HEK293 (cell line): ENCODE measurements at regions of chr12 and their contacts with region 1.

Region 1: DNA sequence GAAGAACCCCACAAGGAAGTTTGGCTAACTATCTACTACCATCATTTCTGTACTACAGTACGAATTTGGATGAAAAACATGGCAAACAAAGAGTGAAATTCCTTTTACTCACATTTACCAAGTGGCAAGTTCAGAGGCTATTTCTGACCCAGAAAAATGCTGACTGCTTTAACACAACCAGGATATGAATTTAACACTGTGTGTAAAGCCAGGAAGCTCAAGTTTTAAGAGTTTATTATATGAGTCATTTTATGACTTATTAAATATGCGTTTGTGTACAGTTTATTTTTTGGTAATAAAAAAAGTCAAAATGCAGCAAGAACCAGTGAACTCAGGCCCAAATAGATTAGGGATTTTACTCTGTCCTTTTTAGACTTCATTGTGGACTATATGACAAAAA is 58.4 kb upstream of the STAC3 start:
- H3K4me3 ChIP-seq: no peak overlapping the region
- H3K27ac ChIP-seq: no peak overlapping the region
- H3K4me1 ChIP-seq: no peaks in the 10 kb centered on the region; the same call in 1 of the 2 replicates
- CTCF ChIP-seq: no peak

Region 2: DNA sequence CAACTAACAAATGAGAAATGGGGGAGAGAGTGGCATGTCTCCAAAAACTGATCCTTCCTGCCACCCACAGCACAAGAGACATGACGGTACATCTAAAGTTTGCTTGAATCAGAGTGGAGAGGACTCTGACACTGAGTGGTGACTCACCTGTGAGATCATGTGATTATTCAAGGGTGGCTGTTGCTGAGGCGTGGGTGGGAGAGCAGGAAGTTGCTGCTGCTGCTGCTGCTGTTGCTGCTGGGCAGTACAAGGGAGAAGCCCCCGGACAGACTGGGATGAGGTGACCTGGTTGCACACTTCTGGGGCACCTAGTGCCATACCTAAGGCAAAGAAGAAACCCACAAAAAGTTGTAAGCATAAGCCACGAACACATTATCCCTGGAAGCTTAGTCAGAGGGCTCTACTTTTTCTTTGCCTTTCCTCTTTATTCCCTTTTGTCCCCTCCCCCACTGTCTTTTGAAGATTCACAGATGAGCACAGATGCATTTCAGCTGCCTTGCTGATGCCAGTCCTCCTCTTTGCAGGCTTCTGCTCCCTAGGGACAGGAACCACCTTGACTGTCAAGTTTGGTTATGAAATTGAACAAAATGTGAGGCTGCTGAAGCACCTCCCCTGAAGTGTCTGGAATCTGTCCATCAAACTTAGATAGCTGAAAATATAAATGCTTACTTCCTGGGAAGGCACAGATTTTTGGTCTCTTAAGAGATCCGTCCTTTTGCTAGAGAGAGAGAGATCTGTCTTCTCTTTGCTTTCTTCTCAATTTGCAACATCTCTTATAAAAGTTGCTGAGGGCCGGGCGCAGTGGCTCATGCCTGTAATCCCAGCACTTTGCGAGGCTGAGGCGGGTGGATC is 29.0 kb before region 1 on chr12:
- CTCF ChIA-PET with region 1: interaction called, 17 read pairs
- POLR2A ChIA-PET with region 1: no interaction called
- H3K4me3 ChIP-seq: no peak overlapping the region
- H3K27ac ChIP-seq: no peak overlapping the region
- H3K4me1 ChIP-seq: 0 out of 2 replicates have a peak, but pooled peaks cover 7% of the 10 kb centered on the region
- CTCF ChIP-seq: no peak

Region 3: DNA sequence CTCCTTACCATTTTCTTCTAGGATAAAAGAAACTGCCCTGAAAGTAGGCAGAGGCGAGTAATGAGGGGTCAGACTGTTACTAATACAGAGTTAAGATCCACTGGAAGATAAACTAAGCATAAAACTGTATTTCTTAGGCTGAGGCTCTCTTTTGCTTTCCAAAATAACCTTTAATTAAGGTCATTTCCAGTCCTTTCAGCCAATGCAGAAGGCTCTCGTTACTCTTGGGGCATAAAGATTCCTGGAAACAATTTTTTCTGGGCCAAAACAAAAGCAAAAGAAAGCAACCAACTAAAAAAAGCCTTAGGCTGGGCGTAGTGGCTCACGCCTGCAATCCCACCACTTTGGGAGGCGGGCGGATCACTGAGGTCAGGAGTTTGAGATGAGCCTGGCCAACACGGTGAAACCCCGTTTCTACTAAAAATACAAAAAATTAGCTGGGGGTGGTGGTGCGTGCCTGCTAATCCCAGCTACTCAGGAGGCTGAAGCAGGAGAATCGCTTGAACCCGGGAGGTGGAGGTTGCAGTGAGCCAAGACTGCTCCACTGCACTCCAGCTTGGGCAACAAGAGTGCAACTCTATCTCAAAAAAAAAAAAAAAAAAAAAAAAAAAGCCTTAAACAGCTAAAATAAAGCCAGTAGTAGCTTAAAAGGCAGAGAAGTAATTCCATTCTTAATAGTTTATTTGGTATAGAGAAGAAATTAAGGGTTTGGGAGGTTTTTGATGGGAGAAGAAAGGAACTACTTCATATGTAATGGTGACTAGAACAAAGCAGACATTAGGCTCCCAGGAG is 10.5 kb after region 1 on chr12:
- CTCF ChIA-PET with region 1: interaction called, 31 read pairs
- POLR2A ChIA-PET with region 1: no interaction called
- H3K4me3 ChIP-seq: no peak overlapping the region
- H3K27ac ChIP-seq: 0 out of 2 replicates have a peak overlapping the region, but pooled peaks have one; percentile 16
- H3K4me1 ChIP-seq: peaks cover 11% of the 10 kb centered on the region
- CTCF ChIP-seq: no peak

Region 4: DNA sequence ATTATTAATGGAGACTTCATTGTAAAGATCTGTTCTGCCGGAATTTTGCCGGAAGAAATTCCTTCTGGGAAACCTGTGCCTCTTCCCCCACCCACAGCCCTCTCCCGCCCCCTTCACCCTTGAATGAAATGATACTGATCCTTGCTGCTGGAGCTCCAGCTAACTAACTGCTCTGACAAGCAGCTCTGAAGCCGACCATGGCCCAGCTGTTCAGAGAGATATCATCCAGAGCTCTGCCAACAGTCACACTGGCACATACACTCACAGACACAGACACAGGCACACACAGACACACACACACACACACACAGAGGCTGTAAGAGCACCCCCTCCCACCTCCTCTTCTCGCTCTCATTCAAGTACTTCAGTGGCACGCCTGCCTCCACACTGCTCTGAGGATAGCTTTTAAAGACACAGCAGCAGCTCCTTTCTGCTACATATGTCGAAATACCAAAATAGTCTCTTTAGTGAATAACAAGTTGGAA is 32.8 kb after region 1 on chr12:
- CTCF ChIA-PET with region 1: interaction called, 11 read pairs
- POLR2A ChIA-PET with region 1: no interaction called
- H3K4me3 ChIP-seq: no peak overlapping the region
- H3K27ac ChIP-seq: no peak overlapping the region
- H3K4me1 ChIP-seq: peaks cover 22% of the 10 kb centered on the region
- CTCF ChIP-seq: no peak

Region 5: DNA sequence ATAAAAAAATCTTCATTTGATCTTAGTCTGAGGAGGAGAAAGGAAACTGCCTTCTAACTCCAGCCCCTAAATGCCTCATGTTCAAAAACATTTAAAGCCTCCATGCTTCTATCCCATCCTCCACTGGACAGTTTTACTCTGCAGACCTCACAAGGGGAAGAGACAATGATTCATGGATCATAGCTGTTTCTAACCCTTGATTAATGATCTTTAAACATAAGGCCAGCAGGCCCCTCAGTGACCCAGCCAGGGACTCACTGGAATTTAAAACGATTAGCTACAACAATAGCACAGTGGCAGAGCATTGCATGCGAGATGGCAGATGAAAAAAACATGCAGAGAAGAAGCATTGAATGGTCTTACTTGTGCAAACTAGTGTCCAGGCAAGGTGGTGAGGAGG is 231.6 kb after region 1 on chr12:
- CTCF ChIA-PET with region 1: no interaction called
- POLR2A ChIA-PET with region 1: no interaction called
- H3K4me3 ChIP-seq: no peak overlapping the region
- H3K27ac ChIP-seq: no peak overlapping the region
- H3K4me1 ChIP-seq: peaks cover 3% of the 10 kb centered on the region
- CTCF ChIP-seq: no peak